Activated B cell treated with CpG ODN at 0.5 μM for 24 hours (primary cell): ENCODE measurements at regions of chr17 and their contacts with region 1.

Region 1: DNA sequence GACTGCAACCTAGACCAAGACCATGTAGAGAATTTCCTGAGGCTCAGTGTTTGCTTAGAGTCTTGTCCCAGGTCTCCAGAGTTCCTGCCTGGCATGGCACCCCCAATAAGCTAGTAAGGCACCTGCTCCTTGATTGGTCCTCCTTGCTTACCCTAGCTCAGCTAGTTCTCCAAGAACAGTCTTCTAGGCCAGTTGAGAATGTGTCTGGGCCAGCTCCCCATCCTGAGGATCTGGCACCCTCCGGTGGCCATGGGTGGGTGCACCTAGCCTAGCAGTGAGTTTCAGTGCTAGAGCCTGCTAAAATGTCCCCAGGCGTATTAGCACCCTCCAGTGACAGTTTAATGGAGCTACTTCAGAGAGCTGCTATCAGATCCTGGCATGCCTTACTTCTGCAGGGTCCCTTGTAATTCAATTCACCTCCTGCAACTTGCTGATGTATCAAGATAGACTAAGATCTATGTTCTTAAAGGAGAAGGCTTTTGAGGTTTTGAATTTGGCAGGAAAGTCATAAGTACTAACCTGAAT is 44.4 kb upstream of the MED13 start:
- DNase-seq: peak; percentile 43
- ATAC-seq: peak; percentile 100
- H3K4me3 Mint-ChIP-seq: no peak overlapping the region
- H3K27ac Mint-ChIP-seq: no peak overlapping the region
- H3K4me1 Mint-ChIP-seq: peaks cover 3% of the 10 kb centered on the region
- H3K27me3 Mint-ChIP-seq: no peaks in the 10 kb centered on the region
- CTCF ChIP-seq: no peak

Region 2: GRCh38 chr17:61478790-61479492 is 630.5 kb before region 1 on chr17:
- CTCF ChIA-PET with region 1: no interaction called
- POLR2A ChIA-PET with region 1: no interaction called
- intact Hi-C with region 1: no loop called
- DNase-seq: no peak
- ATAC-seq: no peak
- H3K4me3 Mint-ChIP-seq: no peak overlapping the region
- H3K27ac Mint-ChIP-seq: no peak overlapping the region
- H3K4me1 Mint-ChIP-seq: no peaks in the 10 kb centered on the region
- H3K27me3 Mint-ChIP-seq: peaks cover 17% of the 10 kb centered on the region
- CTCF ChIP-seq: no peak

Region 3: GRCh38 chr17:61970019-61970418 is 139.4 kb before region 1 on chr17:
- CTCF ChIA-PET with region 1: interaction called, 3 read pairs
- POLR2A ChIA-PET with region 1: interaction called, 3 read pairs
- intact Hi-C with region 1: loop called (anchors 2 kb)
- DNase-seq: no peak
- ATAC-seq: no peak
- H3K4me3 Mint-ChIP-seq: no peak overlapping the region
- H3K27ac Mint-ChIP-seq: no peak overlapping the region
- H3K4me1 Mint-ChIP-seq: peaks cover 3% of the 10 kb centered on the region
- H3K27me3 Mint-ChIP-seq: no peaks in the 10 kb centered on the region
- CTCF ChIP-seq: no peak

Region 4: DNA sequence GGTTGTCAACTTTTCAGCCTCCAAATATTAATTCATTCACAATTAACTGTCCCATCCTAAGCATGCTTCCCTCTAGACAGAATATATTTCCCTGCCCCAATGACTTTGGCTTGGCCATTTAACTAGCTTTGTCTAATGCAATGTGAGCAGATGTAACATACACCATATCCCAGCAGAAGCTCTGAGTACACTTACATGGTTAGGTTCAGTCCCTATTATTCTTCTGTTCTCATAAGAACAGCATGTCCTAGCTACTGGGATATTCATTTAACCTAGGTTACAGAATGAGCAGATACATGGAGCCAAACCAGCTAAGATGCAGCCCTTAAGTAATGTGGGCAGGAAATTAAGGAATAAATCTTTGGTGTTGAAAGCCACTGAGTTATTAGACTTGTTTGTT is 76.1 kb before region 1 on chr17:
- CTCF ChIA-PET with region 1: interaction called, 10 read pairs
- POLR2A ChIA-PET with region 1: no interaction called
- intact Hi-C with region 1: no loop called
- DNase-seq: no peak
- ATAC-seq: no peak
- H3K4me3 Mint-ChIP-seq: no peak overlapping the region
- H3K27ac Mint-ChIP-seq: peak overlapping the region; percentile 18
- H3K4me1 Mint-ChIP-seq: peaks cover 3% of the 10 kb centered on the region
- H3K27me3 Mint-ChIP-seq: no peaks in the 10 kb centered on the region
- CTCF ChIP-seq: no peak

Region 5: GRCh38 chr17:62052757-62053338 is 56.6 kb before region 1 on chr17:
- CTCF ChIA-PET with region 1: interaction called, 21 read pairs
- POLR2A ChIA-PET with region 1: no interaction called
- intact Hi-C with region 1: no loop called
- DNase-seq: no peak
- ATAC-seq: no peak
- H3K4me3 Mint-ChIP-seq: no peak overlapping the region
- H3K27ac Mint-ChIP-seq: no peak overlapping the region
- H3K4me1 Mint-ChIP-seq: peaks cover 28% of the 10 kb centered on the region
- H3K27me3 Mint-ChIP-seq: no peaks in the 10 kb centered on the region
- CTCF ChIP-seq: no peak

Region 6: DNA sequence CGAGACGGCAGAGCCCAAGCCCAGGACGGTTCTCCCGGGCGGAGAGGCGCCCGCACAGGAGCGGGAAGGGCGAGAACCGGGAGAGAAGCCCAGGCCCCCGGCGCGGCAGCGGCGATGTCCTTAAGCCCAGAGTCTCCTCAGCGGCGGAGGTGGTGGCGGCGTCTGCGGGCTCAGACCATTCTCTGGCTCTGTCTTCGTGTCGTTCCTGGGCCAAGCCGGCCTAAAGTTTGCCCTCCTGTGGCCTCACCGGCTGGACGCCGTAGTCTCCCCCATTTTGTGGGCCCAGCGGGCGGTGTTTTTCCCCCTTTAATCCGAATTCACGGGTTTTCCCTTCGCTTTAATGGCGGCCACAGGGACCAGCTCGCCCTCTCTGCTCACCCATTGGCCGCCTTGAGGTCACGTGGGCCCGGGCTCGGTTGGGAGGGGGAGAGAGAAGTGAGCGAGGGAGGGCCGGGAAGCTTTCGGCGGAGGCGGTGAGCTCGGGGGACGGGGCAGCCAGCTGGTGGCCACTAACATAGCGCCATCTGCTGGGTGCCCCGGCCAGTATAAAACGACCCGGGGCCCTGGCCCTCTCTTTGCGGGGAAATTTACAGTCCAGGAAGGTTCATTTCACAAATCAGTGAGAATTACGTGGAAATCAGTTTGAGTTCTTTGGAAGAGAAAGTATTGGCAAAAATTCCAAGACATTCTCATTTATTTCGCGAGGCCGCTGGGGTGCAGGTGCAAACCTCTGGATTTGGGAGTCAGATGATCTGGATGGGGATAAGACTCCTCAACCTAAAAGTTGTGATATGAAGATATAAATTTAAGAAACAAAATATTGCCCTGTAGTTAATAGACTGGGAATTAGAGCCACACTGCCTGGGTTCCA is 43.6 kb before region 1 on chr17:
- CTCF ChIA-PET with region 1: interaction called, 26 read pairs
- POLR2A ChIA-PET with region 1: interaction called, 9 read pairs
- intact Hi-C with region 1: loop called (anchors 1 kb)
- DNase-seq: peak; percentile 92
- ATAC-seq: peak; percentile 96
- H3K4me3 Mint-ChIP-seq: peak overlapping the region; percentile 96
- H3K27ac Mint-ChIP-seq: peak overlapping the region; percentile 97
- H3K4me1 Mint-ChIP-seq: peaks cover 35% of the 10 kb centered on the region
- H3K27me3 Mint-ChIP-seq: no peaks in the 10 kb centered on the region
- CTCF ChIP-seq: peak; percentile 83

Region 7: DNA sequence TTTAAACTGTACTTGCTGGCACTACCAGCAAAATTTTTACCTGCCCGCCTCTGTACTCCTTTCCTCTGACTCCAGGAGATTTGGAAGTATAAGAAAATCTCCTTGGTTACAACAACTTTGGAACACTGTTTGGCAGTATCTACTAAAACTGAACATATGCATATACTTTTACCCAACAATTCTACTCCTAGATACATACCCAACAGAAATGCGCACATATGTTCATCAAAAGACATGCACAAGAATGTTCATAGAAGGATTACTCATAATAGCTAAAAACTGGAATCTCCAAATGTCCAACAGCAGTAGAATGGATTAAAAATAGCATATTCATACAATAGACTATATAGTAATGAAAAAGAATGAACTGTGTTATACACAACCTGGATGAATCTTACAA is 22.7 kb before region 1 on chr17:
- CTCF ChIA-PET with region 1: interaction called, 11 read pairs
- POLR2A ChIA-PET with region 1: no interaction called
- intact Hi-C with region 1: no loop called
- DNase-seq: no peak
- ATAC-seq: no peak
- H3K4me3 Mint-ChIP-seq: no peak overlapping the region
- H3K27ac Mint-ChIP-seq: no peak overlapping the region
- H3K4me1 Mint-ChIP-seq: peaks cover 9% of the 10 kb centered on the region
- H3K27me3 Mint-ChIP-seq: no peaks in the 10 kb centered on the region
- CTCF ChIP-seq: no peak

Region 8: GRCh38 chr17:62164763-62165753 is 55.6 kb after region 1 on chr17:
- CTCF ChIA-PET with region 1: no interaction called
- POLR2A ChIA-PET with region 1: no interaction called
- intact Hi-C with region 1: no loop called
- DNase-seq: no peak
- ATAC-seq: no peak
- H3K4me3 Mint-ChIP-seq: no peak overlapping the region
- H3K27ac Mint-ChIP-seq: no peak overlapping the region
- H3K4me1 Mint-ChIP-seq: no peaks in the 10 kb centered on the region
- H3K27me3 Mint-ChIP-seq: peaks cover 5% of the 10 kb centered on the region
- CTCF ChIP-seq: no peak

Region 9: GRCh38 chr17:62860907-62861848 is 751.7 kb after region 1 on chr17:
- CTCF ChIA-PET with region 1: no interaction called
- POLR2A ChIA-PET with region 1: no interaction called
- intact Hi-C with region 1: no loop called
- DNase-seq: no peak
- ATAC-seq: no peak
- H3K4me3 Mint-ChIP-seq: no peak overlapping the region
- H3K27ac Mint-ChIP-seq: no peak overlapping the region
- H3K4me1 Mint-ChIP-seq: no peaks in the 10 kb centered on the region
- H3K27me3 Mint-ChIP-seq: peaks cover 13% of the 10 kb centered on the region
- CTCF ChIP-seq: no peak